ENCODE measurements at regions of chr3 and their contacts with region 1.

Region 1: DNA sequence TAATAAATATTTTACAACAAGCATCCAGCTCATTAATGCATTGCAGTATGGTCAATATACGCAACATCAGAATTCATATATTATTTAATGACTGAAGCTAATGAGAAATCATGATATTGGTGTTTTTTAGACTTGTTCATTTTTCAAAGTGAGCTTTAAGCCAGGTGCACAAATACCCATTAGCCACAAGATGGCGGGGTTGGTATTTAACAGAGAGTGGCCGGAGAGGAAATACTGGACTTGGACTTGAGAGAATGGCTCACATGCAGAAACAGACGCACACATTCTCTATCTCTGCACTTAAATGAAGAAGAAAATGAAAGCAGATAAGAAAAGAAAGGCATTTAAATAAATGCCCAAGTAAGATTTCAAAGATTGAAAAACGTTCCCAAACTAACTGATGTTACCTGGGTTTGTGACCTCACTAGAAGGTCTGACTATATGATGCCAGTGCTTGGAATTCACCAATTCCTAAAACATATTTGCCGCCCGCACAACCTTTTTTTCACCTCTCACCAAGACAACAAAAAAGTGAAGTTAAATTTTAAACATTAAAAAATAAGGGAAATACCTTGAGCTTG is 21.2 kb upstream of the CRBN start:
- DNase-seq: peak in 1 of 3 donors; percentile 16
- ATAC-seq: peak in 1 of 2 donors; percentile 67
- H3K4me3 ChIP-seq: no peak overlapping the region
- H3K27ac ChIP-seq: no peak overlapping the region
- H3K4me1 ChIP-seq: no peaks in the 10 kb centered on the region
- H3K27me3 ChIP-seq: peaks cover 3% of the 10 kb centered on the region

Region 2: DNA sequence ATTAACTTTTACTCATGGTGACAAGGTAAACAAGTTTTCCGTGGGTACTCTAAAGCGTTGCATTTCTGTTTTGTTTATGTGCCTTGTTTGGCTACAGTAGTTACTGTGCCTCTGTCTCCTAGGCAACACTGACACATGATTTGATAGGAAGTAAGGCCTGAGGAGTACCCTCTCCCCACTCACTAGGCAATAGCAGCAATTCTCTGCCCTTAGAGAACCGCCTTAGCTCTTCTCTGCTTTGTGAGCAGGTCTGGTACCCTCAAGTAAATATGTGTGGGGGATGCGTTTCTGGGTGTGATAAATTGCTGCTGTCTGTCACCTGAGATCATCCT is 90.5 kb before region 1 on chr3 and contains the start of gene IL5RA:
- intact Hi-C with region 1: no loop called
- DNase-seq: no peak
- ATAC-seq: peak; percentile 72 to 85
- H3K4me3 ChIP-seq: peak within 1 kb of the TSS; percentile 58
- H3K27ac ChIP-seq: no peak within 1 kb of the TSS
- H3K4me1 ChIP-seq: no peaks in the 10 kb centered on the region
- H3K27me3 ChIP-seq: no peaks in the 10 kb centered on the region
- total RNA-seq, gene IL5RA: 2.2 to 3.9 (median 3.0) TPM

Region 3: GRCh38 chr3:3998140-3998922 is 797.6 kb after region 1 on chr3:
- intact Hi-C with region 1: loop called in 2 of 4 experiments (anchors 5 to 10 kb)
- DNase-seq: no peak
- ATAC-seq: no peak
- H3K4me3 ChIP-seq: no peak overlapping the region
- H3K27ac ChIP-seq: no peak overlapping the region
- H3K4me1 ChIP-seq: no peaks in the 10 kb centered on the region
- H3K27me3 ChIP-seq: no peaks in the 10 kb centered on the region

Region 4: DNA sequence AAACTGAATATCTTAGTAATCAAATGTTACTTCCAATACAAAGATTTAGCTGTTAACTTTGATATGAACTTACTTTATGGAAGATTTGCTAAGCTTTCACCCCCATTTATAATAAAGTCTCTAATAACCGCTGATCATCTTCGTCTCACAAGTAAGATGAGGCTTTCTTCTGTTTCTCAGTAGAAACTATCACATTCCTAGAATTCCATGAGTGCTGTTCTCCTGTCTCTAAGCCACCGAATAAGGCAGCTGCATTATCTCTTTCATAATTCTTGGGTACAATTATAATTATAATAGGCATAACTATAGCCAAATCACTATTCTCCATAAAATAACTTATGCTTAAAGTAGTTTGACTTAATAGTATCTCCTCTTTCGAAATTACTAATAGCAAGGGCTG is 1084.1 kb after region 1 on chr3:
- intact Hi-C with region 1: loop called (anchors 5 kb)
- DNase-seq: no peak
- ATAC-seq: no peak
- H3K4me3 ChIP-seq: no peak overlapping the region
- H3K27ac ChIP-seq: no peak overlapping the region
- H3K4me1 ChIP-seq: no peaks in the 10 kb centered on the region
- H3K27me3 ChIP-seq: no peaks in the 10 kb centered on the region

Region 5: DNA sequence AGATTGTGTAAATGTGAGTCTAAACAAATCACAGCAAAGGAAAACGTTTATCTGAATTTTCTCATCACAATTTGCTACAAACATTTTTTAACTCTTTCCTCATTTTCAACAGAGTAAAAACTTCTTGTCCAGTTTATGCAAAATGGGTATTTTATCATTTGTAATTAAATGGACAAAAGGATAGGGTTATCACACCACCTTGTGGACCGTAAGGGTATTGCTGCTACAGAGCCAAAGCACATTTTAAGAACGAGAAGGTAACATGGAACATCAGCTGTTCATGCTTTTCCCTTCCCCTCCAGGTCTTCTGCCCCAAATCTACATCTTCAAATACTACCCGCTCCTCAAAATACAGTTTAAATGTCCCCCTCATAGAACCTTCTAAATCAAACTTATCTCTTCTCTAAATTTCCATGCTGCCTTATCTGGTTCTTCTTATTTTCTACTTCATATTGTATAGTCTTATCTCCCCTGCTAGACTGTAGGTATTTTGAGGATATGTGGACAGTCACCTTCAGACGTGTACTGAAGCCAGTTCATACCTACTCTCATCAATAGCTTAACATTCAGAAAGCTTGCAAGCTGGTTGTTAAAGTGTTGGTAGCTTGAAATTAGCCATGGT is 1089.7 kb after region 1 on chr3:
- intact Hi-C with region 1: loop called (anchors 5 kb)
- DNase-seq: no peak
- ATAC-seq: no peak
- H3K4me3 ChIP-seq: no peak overlapping the region
- H3K27ac ChIP-seq: no peak overlapping the region
- H3K4me1 ChIP-seq: no peaks in the 10 kb centered on the region
- H3K27me3 ChIP-seq: no peaks in the 10 kb centered on the region